Dorsolateral prefrontal cortex (tissue), 120 donors: ENCODE measurements at regions of chr5 and their contacts with region 1.

Region 1: DNA sequence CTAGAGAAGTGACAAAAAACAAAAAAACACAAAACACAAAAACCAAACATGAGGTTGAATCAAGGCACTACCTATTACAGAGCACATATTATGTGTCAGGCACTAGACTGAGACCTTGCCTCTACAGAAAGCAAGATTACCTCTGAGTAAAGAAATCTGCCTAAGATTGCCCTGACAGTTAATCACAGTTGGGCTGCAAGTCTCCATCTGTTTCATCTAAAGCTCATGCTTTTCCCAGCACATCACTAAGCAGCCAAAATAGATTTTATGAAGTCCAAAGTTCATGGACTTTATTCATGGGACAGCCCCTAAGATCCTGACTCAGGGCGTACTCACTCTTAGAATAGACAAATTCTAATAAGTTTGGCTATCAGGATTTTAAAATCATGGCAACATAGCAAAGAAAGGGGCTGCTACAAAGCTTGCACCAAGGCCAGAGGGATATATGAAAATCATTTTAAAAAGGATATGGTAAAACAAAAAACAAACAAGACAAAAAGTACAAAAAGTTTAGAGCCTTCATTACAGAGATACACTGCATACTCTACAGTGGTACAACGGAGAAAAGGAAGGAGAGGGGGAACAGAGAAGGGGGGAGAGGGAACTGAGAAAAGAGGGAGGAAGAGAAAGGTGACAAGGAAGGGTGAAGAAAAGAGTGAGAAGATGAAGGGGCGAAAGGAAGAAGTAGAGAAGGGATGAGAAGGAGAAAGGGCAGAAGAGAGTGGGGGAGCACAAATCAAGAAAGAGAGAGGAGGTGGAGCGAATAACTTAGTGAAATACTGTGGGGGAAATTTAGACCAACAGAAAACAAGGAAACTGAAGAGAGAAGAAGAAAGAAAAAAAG is 58.2 kb downstream of the RICTOR start:
- DNase-seq: no peak
- H3K4me3 ChIP-seq: no peak overlapping the region
- H3K27ac ChIP-seq: peak overlapping the region in 4 of 59 donors; percentile 2 to 37 (median 6)
- H3K27me3 ChIP-seq: no peaks in the 10 kb centered on the region
- CTCF ChIP-seq: no peak

Region 2: DNA sequence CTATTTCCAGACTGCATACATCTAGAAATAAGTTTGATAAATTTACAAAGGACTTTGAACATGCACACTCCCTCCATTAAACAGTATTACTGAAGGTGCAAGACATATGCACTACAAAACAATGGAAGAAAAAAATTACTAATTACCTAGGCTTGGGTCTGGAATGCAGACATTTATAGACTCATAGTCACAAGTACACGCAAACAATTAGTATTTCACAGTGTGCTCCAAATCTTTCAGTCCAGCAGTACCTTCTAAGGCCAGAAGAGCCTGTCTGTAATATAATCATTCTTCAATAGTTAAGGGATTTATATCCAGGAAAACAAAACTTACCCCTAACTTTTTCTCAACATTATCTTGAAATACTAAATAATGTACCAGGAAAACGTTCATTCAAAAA is 47.1 kb after region 1 on chr5:
- intact Hi-C with region 1: loop called in 1 of 2 experiments (anchors 10 kb)
- DNase-seq: no peak
- H3K4me3 ChIP-seq: no peak overlapping the region
- H3K27ac ChIP-seq: peak overlapping the region in 9 of 59 donors; percentile 4 to 32 (median 9)
- H3K27me3 ChIP-seq: no peaks in the 10 kb centered on the region
- CTCF ChIP-seq: peak in 2 of 56 donors; percentile 4 to 7